HAP-1 (cell line): ENCODE measurements at regions of chr3 and their contacts with region 1.

Region 1: DNA sequence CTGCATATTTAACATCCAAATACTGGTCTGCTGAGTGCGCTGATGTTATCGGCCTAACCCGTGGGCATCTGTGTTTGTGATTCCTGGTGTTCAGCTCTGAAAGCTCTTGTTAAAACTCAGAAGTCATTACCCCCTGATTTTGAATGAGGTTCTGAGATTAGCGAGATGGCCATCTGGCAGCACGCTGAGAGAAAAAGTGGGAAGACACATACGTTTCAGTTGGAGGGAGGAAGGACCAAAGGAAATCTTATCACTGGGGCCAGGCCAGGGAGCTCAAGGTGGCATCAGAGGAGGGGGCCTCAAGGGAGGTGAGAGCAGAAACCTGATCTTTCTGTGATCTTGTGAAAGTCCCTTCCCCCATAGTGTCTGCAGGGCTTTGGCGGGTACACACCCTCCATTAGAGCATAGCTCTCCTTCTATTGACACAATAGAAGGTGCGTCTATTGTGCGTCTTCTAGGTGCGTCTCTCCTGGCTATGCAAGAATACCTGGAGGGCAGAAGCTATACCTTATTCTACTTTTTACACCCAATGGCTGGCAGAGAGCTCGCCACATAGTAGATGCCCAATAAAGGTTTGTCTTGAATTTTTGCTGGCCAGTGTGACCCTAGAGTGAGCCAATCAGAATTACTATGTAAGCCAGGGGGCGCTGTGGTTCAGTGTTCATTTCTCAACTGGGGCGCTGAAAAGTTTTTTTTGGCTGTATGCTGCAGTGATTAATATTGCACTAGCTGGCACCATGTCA is 182.4 kb downstream of the SHQ1 start:
- DNase-seq: peak in 1 of 2 experiments; percentile 76
- H3K4me3 ChIP-seq: no peak overlapping the region
- H3K4me1 ChIP-seq: no peaks in the 10 kb centered on the region
- H3K27me3 ChIP-seq: no peaks in the 10 kb centered on the region

Region 2: GRCh38 chr3:72533591-72534473 is 132.0 kb before region 1 on chr3:
- in situ Hi-C with region 1: no loop called
- DNase-seq: no peak
- H3K4me3 ChIP-seq: no peak overlapping the region
- H3K4me1 ChIP-seq: no peaks in the 10 kb centered on the region
- H3K27me3 ChIP-seq: no peaks in the 10 kb centered on the region

Region 3: DNA sequence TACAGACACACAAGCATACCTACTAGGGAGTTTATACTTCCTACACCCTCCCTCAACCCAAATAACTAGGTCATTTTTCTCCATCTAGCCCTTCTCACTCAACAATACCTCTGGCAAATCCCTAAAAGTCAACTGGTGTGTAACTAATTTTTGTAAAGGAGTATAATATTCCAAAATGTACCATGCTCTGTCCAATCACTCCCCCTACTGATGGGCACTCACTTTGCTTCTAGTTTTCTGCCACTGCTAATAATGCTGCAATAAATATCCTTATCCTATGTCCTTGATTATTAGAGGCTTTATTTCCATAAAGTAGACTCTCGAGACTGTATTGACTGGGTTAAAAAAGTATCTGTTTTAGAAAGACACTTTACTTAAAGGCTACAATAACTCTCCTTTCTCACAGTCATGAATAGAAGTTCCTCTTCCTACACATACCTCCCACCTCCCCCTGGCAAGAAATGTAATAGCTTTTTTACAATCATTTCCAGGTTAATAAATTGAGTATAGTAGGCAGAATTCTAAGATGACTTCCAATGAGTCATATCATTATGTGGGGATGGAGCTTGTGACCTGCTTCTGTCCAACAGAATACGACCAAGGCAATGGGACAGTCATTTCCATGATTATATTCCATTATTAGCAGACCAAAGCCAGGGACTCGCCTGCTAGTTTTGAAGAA is 152.4 kb after region 1 on chr3:
- in situ Hi-C with region 1: loop called (anchors 10 kb)
- DNase-seq: peak in 1 of 2 experiments; percentile 41
- H3K4me3 ChIP-seq: no peak overlapping the region
- H3K4me1 ChIP-seq: no peaks in the 10 kb centered on the region
- H3K27me3 ChIP-seq: no peaks in the 10 kb centered on the region

Region 4: GRCh38 chr3:73086071-73086494 is 420.2 kb after region 1 on chr3:
- in situ Hi-C with region 1: loop called (anchors 25 kb)
- DNase-seq: peak; percentile 67 to 72
- H3K4me3 ChIP-seq: no peak overlapping the region
- H3K4me1 ChIP-seq: no peaks in the 10 kb centered on the region
- H3K27me3 ChIP-seq: no peaks in the 10 kb centered on the region